Activated CD8-positive, alpha-beta memory T cell treated with anti-CD3 and anti-CD28 coated beads, Interleukin-2, amount 10 ng/mL, durations not matched to agents 7 days and 5 days (primary cell): ENCODE measurements at regions of chr10 and their contacts with region 1.

Region 1: GRCh38 chr10:72364239-72364777 is 9.6 kb upstream of the DNAJB12 start:
- DNase-seq: peak; percentile 92
- ATAC-seq: peak; percentile 100
- H3K4me3 Mint-ChIP-seq: no peak overlapping the region
- H3K27ac Mint-ChIP-seq: peak overlapping the region; percentile 78
- H3K4me1 Mint-ChIP-seq: peaks cover 30% of the 10 kb centered on the region
- H3K27me3 Mint-ChIP-seq: peaks cover 7% of the 10 kb centered on the region

Region 2: GRCh38 chr10:72375585-72375984 is 11.3 kb after region 1 on chr10:
- CTCF ChIA-PET with region 1: interaction called, 10 read pairs
- DNase-seq: no peak
- ATAC-seq: no peak
- H3K4me3 Mint-ChIP-seq: no peak overlapping the region
- H3K27ac Mint-ChIP-seq: no peak overlapping the region
- H3K4me1 Mint-ChIP-seq: peaks cover 20% of the 10 kb centered on the region
- H3K27me3 Mint-ChIP-seq: no peaks in the 10 kb centered on the region

Region 3: DNA sequence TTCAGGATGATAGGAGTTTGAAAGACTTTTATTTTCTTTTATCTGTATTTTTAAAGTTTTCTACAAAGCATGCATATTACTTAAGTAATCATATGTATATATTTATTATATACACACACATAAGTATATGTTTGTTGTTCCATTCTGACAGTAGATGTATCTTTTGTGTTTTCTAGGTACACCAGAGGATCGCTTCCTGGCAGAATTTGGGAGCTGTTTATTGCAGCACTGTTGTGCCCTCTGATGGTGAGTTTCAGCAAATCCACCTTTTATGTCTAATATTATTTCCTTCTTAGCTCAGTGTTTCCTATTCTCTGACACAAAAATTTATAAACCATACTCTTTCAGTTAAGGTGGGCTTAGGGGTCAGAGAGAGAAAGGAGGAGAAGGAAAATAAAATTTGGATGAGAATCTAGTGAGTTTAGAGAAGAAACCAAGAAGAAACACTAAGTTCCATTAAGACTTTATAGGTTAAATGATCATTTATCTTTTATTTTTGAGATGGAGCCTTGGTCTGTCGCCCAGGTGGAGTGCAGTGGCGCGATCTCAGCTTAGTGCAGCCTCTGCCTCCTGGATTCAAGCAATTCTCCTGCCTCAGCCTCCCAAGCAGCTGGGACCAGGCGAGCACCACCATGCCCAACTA is 470.0 kb after region 1 on chr10:
- CTCF ChIA-PET with region 1: interaction called, 44 read pairs
- DNase-seq: peak; percentile 52
- ATAC-seq: peak; percentile 58
- H3K4me3 Mint-ChIP-seq: no peak overlapping the region
- H3K27ac Mint-ChIP-seq: no peak overlapping the region
- H3K4me1 Mint-ChIP-seq: peaks cover 3% of the 10 kb centered on the region
- H3K27me3 Mint-ChIP-seq: no peaks in the 10 kb centered on the region